Panc1 (cell line): ENCODE measurements at regions of chr22 and their contacts with region 1.

Region 1: GRCh38 chr22:39244496-39245129 is at the start of gene PDGFB:
- DNase-seq: no peak
- ATAC-seq: peak; percentile 47
- H3K4me3 ChIP-seq: peak within 1 kb of the TSS; percentile 66 to 72
- H3K27ac ChIP-seq: peak within 1 kb of the TSS; percentile 88
- H3K4me1 ChIP-seq: peaks cover 21% of the 10 kb centered on the region
- H3K27me3 ChIP-seq: no peaks in the 10 kb centered on the region
- CTCF ChIP-seq: no peak
- total RNA-seq, gene PDGFB: 78.0 TPM

Region 2: GRCh38 chr22:40973099-40973498 is 1728.5 kb after region 1 on chr22:
- CTCF ChIA-PET with region 1: interaction called, 11 read pairs
- POLR2A ChIA-PET with region 1: no interaction called
- in situ Hi-C with region 1: no loop called
- intact Hi-C with region 1: no loop called
- DNase-seq: no peak
- ATAC-seq: no peak
- H3K4me3 ChIP-seq: no peak overlapping the region
- H3K27ac ChIP-seq: no peak overlapping the region
- H3K4me1 ChIP-seq: no peaks in the 10 kb centered on the region
- H3K27me3 ChIP-seq: no peaks in the 10 kb centered on the region
- CTCF ChIP-seq: no peak